Activated naive CD4-positive, alpha-beta T cell treated with anti-CD3 and anti-CD28 coated beads, Interleukin-2, amount 10 ng/mL, durations not matched to agents 7 days and 5 days (primary cell): ENCODE measurements at regions of chr1 and their contacts with region 1.

Region 1: DNA sequence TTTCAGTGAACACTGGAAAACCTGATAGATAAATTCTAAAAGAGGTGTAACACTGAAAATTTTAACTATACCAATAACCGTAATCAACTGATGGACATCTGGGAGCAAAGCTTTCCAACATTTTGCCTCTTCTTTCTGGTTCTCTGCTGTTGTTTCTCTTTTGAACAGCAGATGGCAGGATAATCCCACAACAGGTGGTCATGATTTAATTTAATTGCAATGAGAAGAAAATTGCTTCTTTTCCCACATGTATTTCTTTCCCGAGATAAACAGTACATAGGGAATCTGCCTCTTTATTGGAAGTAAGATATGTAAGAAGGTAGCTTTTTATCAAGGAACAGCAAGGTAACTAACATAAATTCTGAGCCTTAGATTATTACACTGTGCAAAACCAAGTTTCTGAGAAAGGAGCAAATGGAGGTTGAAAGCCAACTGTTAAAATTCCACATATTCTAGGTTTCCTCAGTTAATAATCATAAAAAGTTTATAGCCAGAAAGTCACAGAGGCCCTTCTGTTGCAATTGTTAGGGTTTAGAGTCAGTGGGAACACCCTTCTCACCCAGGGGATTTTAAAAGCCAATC is 72.9 kb downstream of the RPS6KA1 start:
- DNase-seq: peak; percentile 55
- H3K4me3 Mint-ChIP-seq: no peak overlapping the region
- H3K27ac Mint-ChIP-seq: no peak overlapping the region
- H3K4me1 Mint-ChIP-seq: peaks cover 15% of the 10 kb centered on the region
- H3K27me3 Mint-ChIP-seq: peaks cover 37% of the 10 kb centered on the region

Region 2: GRCh38 chr1:26493267-26493666 is 109.2 kb before region 1 on chr1:
- CTCF ChIA-PET with region 1: no interaction called
- DNase-seq: no peak
- H3K4me3 Mint-ChIP-seq: no peak overlapping the region
- H3K27ac Mint-ChIP-seq: no peak overlapping the region
- H3K4me1 Mint-ChIP-seq: peaks cover 10% of the 10 kb centered on the region
- H3K27me3 Mint-ChIP-seq: peaks cover 17% of the 10 kb centered on the region

Region 3: DNA sequence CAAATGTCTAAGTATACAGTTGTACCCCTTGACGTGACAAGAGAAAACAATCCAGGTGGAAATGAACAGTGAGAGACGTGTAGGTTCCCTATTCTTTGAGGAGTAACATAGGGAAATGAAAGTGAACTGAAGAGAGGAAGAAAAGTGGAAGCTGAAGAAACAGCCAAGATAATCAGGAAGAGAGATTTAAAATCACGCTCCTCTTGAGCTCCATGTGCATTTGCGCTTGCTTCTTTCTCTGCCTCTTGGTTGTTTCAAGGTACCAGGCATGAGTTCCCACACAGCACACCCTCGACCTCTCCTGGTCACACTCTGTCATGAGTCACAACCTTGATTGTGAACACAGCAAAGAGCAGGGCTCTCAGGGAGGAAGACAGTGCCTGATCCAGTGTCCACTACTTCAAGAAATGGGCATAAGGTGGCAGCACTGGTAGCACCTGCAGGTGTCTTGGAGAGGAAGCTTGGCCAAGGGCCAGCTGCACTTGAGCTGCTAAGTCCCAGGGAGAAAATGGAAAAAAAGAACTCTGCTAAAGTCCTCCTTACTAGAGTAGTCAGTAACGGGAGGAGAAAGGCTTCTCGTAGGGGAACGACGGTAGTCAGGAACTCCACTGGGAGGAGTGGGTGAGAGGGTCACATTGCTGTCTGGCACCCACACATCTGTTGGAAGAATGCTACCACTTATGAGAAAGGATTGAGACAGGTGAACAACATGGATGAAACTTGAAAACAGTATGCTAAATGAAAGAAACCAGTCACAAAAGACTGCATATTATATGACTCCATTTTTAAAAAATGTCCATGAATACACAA is 75.0 kb after region 1 on chr1:
- CTCF ChIA-PET with region 1: interaction called, 36 read pairs
- DNase-seq: peak; percentile 63
- H3K4me3 Mint-ChIP-seq: no peak overlapping the region
- H3K27ac Mint-ChIP-seq: peak overlapping the region; percentile 30
- H3K4me1 Mint-ChIP-seq: peaks cover 22% of the 10 kb centered on the region
- H3K27me3 Mint-ChIP-seq: peaks cover 9% of the 10 kb centered on the region

Region 4: GRCh38 chr1:26799479-26800142 is 197.1 kb after region 1 on chr1:
- CTCF ChIA-PET with region 1: interaction called, 10 read pairs
- DNase-seq: peak; percentile 31
- H3K4me3 Mint-ChIP-seq: peak overlapping the region; percentile 46
- H3K27ac Mint-ChIP-seq: peak overlapping the region; percentile 94
- H3K4me1 Mint-ChIP-seq: peaks cover 58% of the 10 kb centered on the region
- H3K27me3 Mint-ChIP-seq: no peaks in the 10 kb centered on the region

Region 5: GRCh38 chr1:26874896-26875295 is 272.4 kb after region 1 on chr1:
- CTCF ChIA-PET with region 1: interaction called, 10 read pairs
- DNase-seq: no peak
- H3K4me3 Mint-ChIP-seq: no peak overlapping the region
- H3K27ac Mint-ChIP-seq: no peak overlapping the region
- H3K4me1 Mint-ChIP-seq: peaks cover 2% of the 10 kb centered on the region
- H3K27me3 Mint-ChIP-seq: no peaks in the 10 kb centered on the region